PC-3 (cell line): ENCODE measurements at regions of chr2 and their contacts with region 1.

Region 1: DNA sequence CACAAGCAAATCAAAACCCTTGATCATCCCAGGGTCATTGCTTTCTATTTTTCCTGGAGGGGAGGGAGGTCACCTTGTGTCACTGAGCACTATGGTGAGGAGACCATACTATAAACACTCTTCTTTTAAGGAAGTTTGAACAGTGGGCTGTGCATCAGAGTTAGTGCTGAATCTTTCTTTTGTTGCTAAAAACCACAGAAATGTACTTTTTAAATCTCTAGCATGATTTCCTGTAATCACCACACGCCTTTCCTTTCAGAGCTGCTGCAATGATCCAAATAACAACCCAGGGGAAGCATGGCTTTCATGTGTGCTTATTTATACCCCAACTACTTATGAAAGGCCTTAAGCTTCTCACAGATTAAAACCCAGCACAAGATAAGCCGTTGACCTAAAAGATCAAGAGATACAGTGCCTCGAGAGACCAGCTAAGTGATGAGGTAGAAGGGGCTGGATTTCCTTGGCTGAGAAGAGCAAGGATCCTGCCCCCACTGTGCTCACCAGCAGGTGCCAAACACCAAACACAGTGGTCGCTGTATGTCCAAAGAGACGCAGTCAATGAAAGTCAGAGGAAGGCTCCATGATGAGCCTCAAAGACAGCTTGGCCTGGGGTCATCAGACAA is 34.7 kb downstream of the TRABD2A start:
- DNase-seq: no peak
- ATAC-seq: no peak
- H3K4me3 ChIP-seq: no peak overlapping the region
- H3K27ac ChIP-seq: no peak overlapping the region
- H3K4me1 ChIP-seq: peaks cover 18% of the 10 kb centered on the region
- H3K27me3 ChIP-seq: no peaks in the 10 kb centered on the region
- CTCF ChIP-seq: no peak

Region 2: DNA sequence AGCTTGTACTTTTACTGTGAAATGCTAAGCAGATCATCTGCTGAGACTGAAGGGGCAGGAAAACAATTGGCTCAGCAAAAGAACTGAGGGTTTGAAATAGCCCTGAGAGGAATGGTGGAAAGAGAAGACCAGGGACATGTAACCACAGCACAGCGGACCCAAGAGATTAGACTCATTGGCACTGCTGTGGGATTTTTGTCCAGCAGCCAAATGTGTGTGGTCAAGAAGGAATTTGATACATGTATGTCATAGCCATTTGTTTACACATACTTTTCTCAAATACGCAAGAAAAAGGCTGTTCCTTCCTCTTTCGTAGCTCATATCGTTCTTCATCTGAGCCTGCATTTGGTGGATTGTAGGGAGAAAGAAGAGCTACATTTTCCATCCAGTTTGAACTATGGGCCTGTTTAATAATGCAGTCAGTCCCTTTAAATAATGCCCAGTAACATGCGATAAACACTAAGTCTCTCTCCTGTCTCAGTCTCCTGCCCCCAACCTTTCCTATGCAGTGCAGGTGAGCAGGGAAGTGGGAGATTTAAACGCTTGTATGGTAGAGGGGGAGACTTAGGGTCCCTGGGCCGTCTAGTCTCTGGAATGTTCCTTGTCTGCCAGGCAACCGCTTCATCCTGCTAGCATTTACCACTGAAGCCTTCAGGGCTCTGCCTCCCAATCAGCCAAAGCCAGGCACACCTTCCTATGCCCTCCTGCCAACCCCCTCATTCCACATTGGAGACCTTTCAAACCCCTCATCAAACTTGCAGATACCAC is 38.9 kb before region 1 on chr2:
- CTCF ChIA-PET with region 1: no interaction called
- POLR2A ChIA-PET with region 1: no interaction called
- intact Hi-C with region 1: loop called (anchors 5 kb)
- DNase-seq: peak; percentile 95
- ATAC-seq: peak; percentile 90
- H3K4me3 ChIP-seq: no peak overlapping the region
- H3K27ac ChIP-seq: peak overlapping the region; percentile 38
- H3K4me1 ChIP-seq: peaks cover 14% of the 10 kb centered on the region
- H3K27me3 ChIP-seq: peaks cover 5% of the 10 kb centered on the region; the same call in 1 of the 2 replicates
- CTCF ChIP-seq: no peak

Region 3: GRCh38 chr2:85564144-85564563 is 718.0 kb after region 1 on chr2:
- CTCF ChIA-PET with region 1: no interaction called
- POLR2A ChIA-PET with region 1: no interaction called
- intact Hi-C with region 1: no loop called
- DNase-seq: no peak
- ATAC-seq: no peak
- H3K4me3 ChIP-seq: no peak overlapping the region
- H3K27ac ChIP-seq: no peak overlapping the region
- H3K4me1 ChIP-seq: peaks cover 10% of the 10 kb centered on the region
- H3K27me3 ChIP-seq: no peaks in the 10 kb centered on the region
- CTCF ChIP-seq: no peak